Transverse colon (tissue), 4 donors: ENCODE measurements at regions of chr1 and their contacts with region 1.

Region 1: GRCh38 chr1:105243969-105244368 is 1494.3 kb downstream of the AMY1C start:
- DNase-seq: no peak
- H3K4me3 ChIP-seq: no peak overlapping the region
- H3K27ac ChIP-seq: no peak overlapping the region
- H3K4me1 ChIP-seq: no peaks in the 10 kb centered on the region
- H3K27me3 ChIP-seq: no peaks in the 10 kb centered on the region
- CTCF ChIP-seq: no peak
- EP300 ChIP-seq: no peak
- POLR2A ChIP-seq: no peak

Region 2: DNA sequence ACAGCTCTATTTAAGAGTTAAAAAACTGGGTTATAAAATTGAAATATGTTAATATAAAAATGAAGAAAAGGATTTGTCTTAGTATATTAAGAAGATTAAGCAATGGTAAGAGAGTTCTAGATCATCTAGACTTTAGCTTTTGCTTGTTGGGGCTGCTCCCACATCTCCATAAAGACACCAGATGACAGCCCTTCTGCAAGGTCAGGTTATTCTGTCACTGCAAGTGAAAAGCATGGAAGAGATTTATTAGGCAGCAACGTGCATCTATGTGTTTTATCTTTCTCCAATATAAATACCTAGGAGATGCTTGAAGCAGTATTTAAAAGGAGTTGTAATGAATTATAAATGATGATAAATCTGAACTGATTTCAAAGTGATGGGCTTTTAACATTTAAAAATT is 66.1 kb after region 1 on chr1:
- in situ Hi-C with region 1: no loop called
- intact Hi-C with region 1: no loop called
- DNase-seq: no peak
- H3K4me3 ChIP-seq: no peak overlapping the region
- H3K27ac ChIP-seq: no peak overlapping the region
- H3K4me1 ChIP-seq: no peaks in the 10 kb centered on the region
- H3K27me3 ChIP-seq: no peaks in the 10 kb centered on the region
- CTCF ChIP-seq: no peak
- EP300 ChIP-seq: no peak
- POLR2A ChIP-seq: no peak

Region 3: GRCh38 chr1:106306636-106307035 is 1062.7 kb after region 1 on chr1:
- in situ Hi-C with region 1: no loop called
- intact Hi-C with region 1: loop called (anchors 5 kb)
- DNase-seq: no peak
- H3K4me3 ChIP-seq: no peak overlapping the region
- H3K27ac ChIP-seq: no peak overlapping the region
- H3K4me1 ChIP-seq: no peaks in the 10 kb centered on the region
- H3K27me3 ChIP-seq: no peaks in the 10 kb centered on the region
- CTCF ChIP-seq: no peak
- EP300 ChIP-seq: no peak
- POLR2A ChIP-seq: no peak